Activated CD4-positive, alpha-beta T cell treated with anti-CD3 and anti-CD28 coated beads, Interleukin-2, amount 10 ng/mL, durations not matched to agents 24 days and 14 days (primary cell): ENCODE measurements at regions of chr19 and their contacts with region 1.

Region 1: GRCh38 chr19:9584073-9584833 is at the start of gene ZNF121:
- DNase-seq: peak; percentile 95
- H3K4me3 Mint-ChIP-seq: peak within 1 kb of the TSS; percentile 93
- H3K27ac Mint-ChIP-seq: peak within 1 kb of the TSS; percentile 95
- H3K4me1 Mint-ChIP-seq: peaks cover 13% of the 10 kb centered on the region
- H3K27me3 Mint-ChIP-seq: peaks cover 2% of the 10 kb centered on the region
- total RNA-seq, gene ZNF121: 63.9 and 69.4 TPM in 2 replicates

Region 2: DNA sequence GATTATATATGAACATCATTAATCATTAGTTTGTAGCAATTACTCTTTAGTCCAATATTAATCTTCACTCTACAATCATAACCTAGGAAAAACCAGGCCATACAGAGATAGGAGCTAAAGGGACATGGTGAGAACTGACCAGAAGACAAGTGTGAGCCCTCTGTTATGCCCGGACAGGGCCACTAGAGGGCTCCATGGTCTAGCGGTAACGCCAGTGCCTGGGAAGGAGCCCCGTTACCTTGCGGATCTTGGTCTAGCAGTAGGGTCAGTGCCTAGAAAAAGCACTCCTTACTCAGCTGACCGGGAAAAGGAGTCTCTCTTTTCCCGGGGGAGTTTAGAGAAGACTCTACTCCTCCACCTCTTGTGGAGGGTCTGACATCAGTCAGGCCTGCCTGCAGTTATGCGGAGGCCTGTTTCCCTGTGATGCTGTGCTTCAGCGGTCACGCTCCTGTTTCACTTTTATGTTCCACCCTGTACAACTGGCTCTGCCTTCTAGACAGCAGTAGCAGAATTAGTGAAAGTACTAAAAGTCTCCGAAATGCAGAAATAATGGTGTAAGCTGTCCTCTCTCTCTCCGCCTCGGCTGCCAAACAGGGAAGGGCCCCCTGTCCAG is 378.6 kb before region 1 on chr19:
- intact Hi-C with region 1: loop called (anchors 5 kb)
- DNase-seq: peak; percentile 90
- H3K4me3 Mint-ChIP-seq: peak overlapping the region; percentile 56
- H3K27ac Mint-ChIP-seq: no peak overlapping the region
- H3K4me1 Mint-ChIP-seq: peaks cover 5% of the 10 kb centered on the region
- H3K27me3 Mint-ChIP-seq: no peaks in the 10 kb centered on the region

Region 3: GRCh38 chr19:9323919-9324583 is 260.2 kb before region 1 on chr19 and contains the start of gene ZNF559:
- intact Hi-C with region 1: loop called (anchors 5 kb)
- DNase-seq: peak; percentile 98
- H3K4me3 Mint-ChIP-seq: peak within 1 kb of the TSS; percentile 93
- H3K27ac Mint-ChIP-seq: peak within 1 kb of the TSS; percentile 94
- H3K4me1 Mint-ChIP-seq: peaks cover 9% of the 10 kb centered on the region
- H3K27me3 Mint-ChIP-seq: no peaks in the 10 kb centered on the region
- total RNA-seq, gene ZNF559: 8.2 and 9.5 TPM in 2 replicates

Region 4: GRCh38 chr19:9485140-9485539 is 99.1 kb before region 1 on chr19:
- intact Hi-C with region 1: no loop called
- DNase-seq: no peak
- H3K4me3 Mint-ChIP-seq: no peak overlapping the region
- H3K27ac Mint-ChIP-seq: no peak overlapping the region
- H3K4me1 Mint-ChIP-seq: no peaks in the 10 kb centered on the region
- H3K27me3 Mint-ChIP-seq: no peaks in the 10 kb centered on the region

Region 5: GRCh38 chr19:9538183-9539058 is 45.8 kb before region 1 on chr19 and contains the start of gene ZNF426:
- intact Hi-C with region 1: loop called (anchors 2 kb)
- DNase-seq: peak; percentile 95
- H3K4me3 Mint-ChIP-seq: peak within 1 kb of the TSS; percentile 97
- H3K27ac Mint-ChIP-seq: peak within 1 kb of the TSS; percentile 92
- H3K4me1 Mint-ChIP-seq: peaks cover 8% of the 10 kb centered on the region
- H3K27me3 Mint-ChIP-seq: no peaks in the 10 kb centered on the region
- total RNA-seq, gene ZNF426: 9.7 and 10.9 TPM in 2 replicates

Region 6: GRCh38 chr19:9621156-9622037 is 37.1 kb after region 1 on chr19 and contains the start of gene ZNF561:
- intact Hi-C with region 1: loop called (anchors 1 kb)
- DNase-seq: peak; percentile 96
- H3K4me3 Mint-ChIP-seq: peak within 1 kb of the TSS; percentile 97
- H3K27ac Mint-ChIP-seq: peak within 1 kb of the TSS; percentile 98
- H3K4me1 Mint-ChIP-seq: peaks cover 23% of the 10 kb centered on the region
- H3K27me3 Mint-ChIP-seq: peaks cover 2% of the 10 kb centered on the region
- total RNA-seq, gene ZNF561: 35.3 and 37.2 TPM in 2 replicates